AG04450 (cell line): ENCODE measurements at regions of chr3 and their contacts with region 1.

Region 1: GRCh38 chr3:33717866-33718594 is at the start of gene CLASP2:
- DNase-seq: peak; percentile 55
- H3K4me3 ChIP-seq: peak within 1 kb of the TSS; percentile 78
- H3K27ac ChIP-seq: peak within 1 kb of the TSS; percentile 82
- H3K27me3 ChIP-seq: no peaks in the 10 kb centered on the region
- CTCF ChIP-seq: no peak
- polyA plus RNA-seq, gene CLASP2: 19.2 and 27.4 TPM in 2 replicates

Region 2: GRCh38 chr3:33636125-33636850 is 81.7 kb before region 1 on chr3:
- CTCF ChIA-PET with region 1: interaction called, 22 read pairs
- POLR2A ChIA-PET with region 1: no interaction called
- DNase-seq: peak; percentile 42
- H3K4me3 ChIP-seq: no peak overlapping the region
- H3K27ac ChIP-seq: no peak overlapping the region
- H3K27me3 ChIP-seq: no peaks in the 10 kb centered on the region
- CTCF ChIP-seq: peak; percentile 67